AG04450 (cell line): ENCODE measurements at regions of chr22 and their contacts with region 1.

Region 1: GRCh38 chr22:39332441-39333064 is 13.1 kb upstream of the RPL3 start:
- DNase-seq: no peak
- H3K4me3 ChIP-seq: no peak overlapping the region
- H3K27ac ChIP-seq: peak overlapping the region; percentile 31
- H3K27me3 ChIP-seq: peaks cover 2% of the 10 kb centered on the region
- CTCF ChIP-seq: no peak

Region 2: GRCh38 chr22:39343259-39344048 is 10.9 kb after region 1 on chr22:
- CTCF ChIA-PET with region 1: interaction called, 26 read pairs
- POLR2A ChIA-PET with region 1: no interaction called
- DNase-seq: no peak
- H3K4me3 ChIP-seq: no peak overlapping the region
- H3K27ac ChIP-seq: no peak overlapping the region
- H3K27me3 ChIP-seq: peaks cover 2% of the 10 kb centered on the region
- CTCF ChIP-seq: peak; percentile 88

Region 3: DNA sequence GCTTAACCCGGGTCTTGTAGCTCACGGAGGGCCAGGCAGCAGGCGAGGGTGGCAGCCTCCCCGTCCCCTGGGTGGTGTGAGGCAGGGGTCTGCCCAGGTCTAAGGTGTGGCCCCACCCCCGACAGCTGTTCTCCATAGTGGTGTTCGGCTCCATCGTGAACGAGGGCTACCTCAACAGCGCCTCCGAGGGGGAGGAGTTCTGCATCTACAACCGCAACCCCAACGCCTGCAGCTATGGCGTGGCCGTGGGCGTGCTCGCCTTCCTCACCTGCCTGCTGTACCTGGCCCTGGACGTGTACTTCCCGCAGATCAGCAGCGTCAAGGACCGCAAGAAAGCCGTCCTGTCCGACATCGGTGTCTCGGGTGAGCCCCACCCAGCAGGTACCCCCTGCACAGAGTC is 41.6 kb after region 1 on chr22:
- CTCF ChIA-PET with region 1: no interaction called
- POLR2A ChIA-PET with region 1: no interaction called
- DNase-seq: no peak
- H3K4me3 ChIP-seq: no peak overlapping the region
- H3K27ac ChIP-seq: no peak overlapping the region
- H3K27me3 ChIP-seq: no peaks in the 10 kb centered on the region
- CTCF ChIP-seq: no peak